Body of pancreas (tissue), 4 donors: ENCODE measurements at regions of chr16 and their contacts with region 1.

Region 1: GRCh38 chr16:11783319-11784037 is 13.6 kb downstream of the ZC3H7A start:
- DNase-seq: no peak
- ATAC-seq: peak; percentile 61
- H3K4me3 ChIP-seq: no peak overlapping the region
- H3K27ac ChIP-seq: peak overlapping the region; percentile 83 to 89 (median 86)
- H3K4me1 ChIP-seq: peaks cover 50% of the 10 kb centered on the region
- H3K27me3 ChIP-seq: no peaks in the 10 kb centered on the region
- CTCF ChIP-seq: no peak
- POLR2A ChIP-seq: no peak

Region 2: GRCh38 chr16:11848842-11849241 is 65.4 kb after region 1 on chr16:
- intact Hi-C with region 1: loop called (anchors 10 kb)
- DNase-seq: no peak
- ATAC-seq: no peak
- H3K4me3 ChIP-seq: no peak overlapping the region
- H3K27ac ChIP-seq: no peak overlapping the region
- H3K4me1 ChIP-seq: peaks cover 38% of the 10 kb centered on the region
- H3K27me3 ChIP-seq: no peaks in the 10 kb centered on the region
- CTCF ChIP-seq: no peak
- POLR2A ChIP-seq: no peak

Region 3: DNA sequence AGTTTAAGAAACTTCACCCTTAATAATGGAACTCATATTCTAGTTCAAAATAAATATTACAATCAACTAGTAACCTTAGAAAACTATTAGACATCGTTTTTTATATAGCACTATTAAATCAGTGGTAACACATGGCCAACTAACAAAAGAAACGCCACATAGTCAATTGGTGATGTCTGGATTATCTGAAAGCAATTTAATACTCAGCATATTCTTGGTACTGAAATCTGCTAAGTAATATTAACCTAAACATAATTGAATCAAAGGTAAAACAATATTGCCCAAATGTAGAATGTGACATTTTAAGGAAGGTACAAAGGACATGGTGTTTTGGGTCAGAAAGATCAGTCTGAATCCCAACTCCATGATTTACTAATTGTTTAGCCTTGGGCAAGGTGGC is 79.0 kb after region 1 on chr16:
- intact Hi-C with region 1: no loop called
- DNase-seq: no peak
- ATAC-seq: no peak
- H3K4me3 ChIP-seq: no peak overlapping the region
- H3K27ac ChIP-seq: no peak overlapping the region
- H3K4me1 ChIP-seq: no peaks in the 10 kb centered on the region
- H3K27me3 ChIP-seq: no peaks in the 10 kb centered on the region
- CTCF ChIP-seq: no peak
- POLR2A ChIP-seq: no peak

Region 4: DNA sequence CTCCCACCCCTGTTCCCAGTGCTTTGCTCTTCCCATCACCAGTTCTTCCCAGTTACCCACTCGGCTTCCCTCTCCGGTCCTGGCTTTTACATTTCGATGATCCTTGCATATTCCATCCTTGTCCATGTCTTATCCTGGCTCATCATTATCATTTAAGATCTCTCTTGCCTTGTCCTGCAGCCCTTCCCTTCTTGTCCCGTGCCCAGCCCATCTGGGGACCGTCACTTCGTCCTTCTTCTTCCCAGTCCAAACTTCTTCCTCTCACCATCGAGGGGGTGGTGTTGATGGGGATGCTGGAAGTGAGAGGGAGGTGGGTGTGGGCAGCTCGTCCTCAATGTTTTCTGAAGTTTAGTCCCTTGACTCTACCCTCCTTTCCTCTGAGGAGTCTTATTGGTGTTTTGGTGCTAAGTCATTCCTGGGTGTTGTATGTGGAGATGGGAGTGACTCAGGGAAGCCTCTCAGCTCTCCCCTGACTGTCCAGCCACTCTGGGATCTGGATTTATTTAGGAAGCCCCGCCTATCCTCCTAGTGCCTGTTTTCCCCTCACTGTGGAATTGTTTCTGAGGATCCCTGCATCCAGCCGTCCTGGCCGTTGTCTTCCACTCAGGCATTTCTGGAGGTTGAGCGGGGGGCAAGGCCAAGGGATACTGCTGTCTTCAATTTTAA is 194.0 kb after region 1 on chr16:
- intact Hi-C with region 1: no loop called
- DNase-seq: no peak
- ATAC-seq: peak; percentile 23
- H3K4me3 ChIP-seq: peak overlapping the region; percentile 44 to 99
- H3K27ac ChIP-seq: peak overlapping the region in 1 of 4 donors; percentile 51
- H3K4me1 ChIP-seq: peaks cover 20% of the 10 kb centered on the region
- H3K27me3 ChIP-seq: no peaks in the 10 kb centered on the region
- CTCF ChIP-seq: no peak
- POLR2A ChIP-seq: no peak